BJ (cell line): ENCODE measurements at regions of chr2 and their contacts with region 1.

Region 1: GRCh38 chr2:232292395-232293154 is 86.0 kb upstream of the ALPP start:
- DNase-seq: no peak
- H3K4me3 ChIP-seq: no peak overlapping the region
- H3K27me3 ChIP-seq: no peaks in the 10 kb centered on the region
- CTCF ChIP-seq: peak; percentile 73

Region 2: DNA sequence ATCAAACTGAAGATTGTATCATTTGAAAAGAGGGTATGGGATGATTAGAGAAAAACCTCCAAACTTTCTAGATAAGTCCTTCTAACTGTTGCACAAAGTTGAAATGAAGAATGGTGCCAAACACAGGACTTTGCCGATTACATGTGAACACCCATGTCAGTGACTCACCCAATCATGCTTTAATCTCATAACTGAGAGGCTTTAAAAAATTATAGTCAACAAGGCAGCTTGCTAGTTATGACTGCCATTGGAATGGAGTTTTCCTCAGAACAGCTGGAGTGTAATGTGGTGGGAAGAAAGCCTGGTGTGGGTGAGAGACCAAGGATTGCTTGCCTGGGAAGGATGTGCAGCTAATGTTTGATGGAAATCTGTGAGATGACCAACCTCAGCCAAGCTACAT is 12.2 kb before region 1 on chr2:
- CTCF ChIA-PET with region 1: interaction called, 43 read pairs
- POLR2A ChIA-PET with region 1: no interaction called
- DNase-seq: no peak
- H3K4me3 ChIP-seq: no peak overlapping the region
- H3K27me3 ChIP-seq: no peaks in the 10 kb centered on the region
- CTCF ChIP-seq: no peak

Region 3: DNA sequence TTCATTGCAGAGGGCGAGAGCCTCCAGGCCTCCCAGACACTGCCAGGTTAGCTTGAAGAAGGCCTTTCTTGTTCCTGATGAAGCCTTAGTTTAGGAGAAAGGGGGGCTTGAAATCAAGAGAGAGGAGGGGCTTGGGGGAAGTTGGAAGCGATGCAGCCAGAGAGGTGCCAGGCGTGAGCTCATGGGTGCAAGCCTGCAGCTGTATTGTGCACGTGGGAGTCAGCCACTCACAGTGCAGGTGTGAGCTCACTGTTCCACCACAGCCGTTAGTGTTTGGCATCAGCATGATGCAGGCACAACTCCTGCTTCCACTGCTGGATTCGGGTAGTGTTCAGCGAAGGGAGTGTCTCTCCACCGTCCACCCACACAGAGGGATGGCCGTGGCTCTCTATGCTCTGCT is 17.5 kb after region 1 on chr2:
- CTCF ChIA-PET with region 1: interaction called, 16 read pairs
- POLR2A ChIA-PET with region 1: no interaction called
- DNase-seq: no peak
- H3K4me3 ChIP-seq: no peak overlapping the region
- H3K27me3 ChIP-seq: no peaks in the 10 kb centered on the region
- CTCF ChIP-seq: no peak

Region 4: DNA sequence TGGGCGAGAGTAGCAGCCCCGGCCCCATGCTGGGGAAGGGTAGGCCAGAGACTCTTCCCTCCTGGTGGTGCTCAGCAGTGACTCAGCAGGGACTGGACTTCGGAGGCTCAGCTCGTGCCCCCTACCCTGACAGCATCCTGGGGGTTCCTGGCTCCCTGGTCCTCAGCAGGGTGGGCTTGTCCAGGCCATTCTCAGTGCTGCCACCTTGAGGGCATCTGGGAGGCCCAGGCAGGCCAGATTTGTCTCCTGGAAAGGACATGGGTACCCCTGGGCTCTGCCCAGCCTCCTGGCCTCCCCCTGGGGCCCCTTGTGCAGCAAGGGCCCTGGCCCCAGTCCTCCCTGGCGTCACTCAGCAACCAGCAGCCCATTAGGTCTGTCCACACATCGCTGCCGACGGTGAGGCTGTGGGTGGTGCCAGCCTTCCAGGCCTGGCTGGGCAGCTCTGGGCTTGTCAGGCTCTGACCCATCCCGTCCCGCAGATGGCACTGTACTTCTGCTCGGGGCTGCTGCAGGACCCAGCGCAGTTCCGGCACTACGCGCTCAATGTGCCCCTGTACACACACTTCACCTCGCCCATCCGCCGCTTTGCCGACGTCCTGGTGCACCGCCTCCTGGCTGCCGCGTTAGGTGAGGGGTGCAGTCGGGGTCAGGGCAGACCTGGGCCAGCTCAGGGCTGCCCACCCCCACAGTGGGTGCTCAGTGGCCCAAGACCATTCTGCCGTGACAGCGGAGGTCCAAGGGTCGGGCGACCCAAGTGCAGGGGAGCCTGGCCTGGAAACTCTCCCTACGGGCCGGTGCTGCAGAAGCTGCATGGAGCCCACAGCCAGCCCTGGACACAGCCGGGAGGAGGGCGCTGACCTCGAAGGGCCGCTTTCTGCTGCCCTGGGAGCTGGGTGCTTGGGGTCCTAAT is 41.0 kb after region 1 on chr2:
- CTCF ChIA-PET with region 1: no interaction called
- POLR2A ChIA-PET with region 1: no interaction called
- DNase-seq: no peak
- H3K4me3 ChIP-seq: no peak overlapping the region
- H3K27me3 ChIP-seq: no peaks in the 10 kb centered on the region
- CTCF ChIP-seq: peak; percentile 57